MCF 10A (cell line): ENCODE measurements at regions of chr13 and their contacts with region 1.

Region 1: GRCh38 chr13:76667551-76667950 is 218.7 kb downstream of the KCTD12 start:
- DNase-seq: peak; percentile 59
- H3K4me3 Mint-ChIP-seq: no peak overlapping the region
- H3K27ac Mint-ChIP-seq: no peak overlapping the region
- H3K4me1 Mint-ChIP-seq: peaks cover 20% of the 10 kb centered on the region
- H3K27me3 Mint-ChIP-seq: no peaks in the 10 kb centered on the region
- CTCF ChIP-seq: peak; percentile 26

Region 2: GRCh38 chr13:76822698-76823267 is 155.2 kb after region 1 on chr13:
- CTCF ChIA-PET with region 1: interaction called, 4 read pairs
- POLR2A ChIA-PET with region 1: no interaction called
- intact Hi-C with region 1: loop called (anchors 2 kb)
- DNase-seq: peak; percentile 51
- H3K4me3 Mint-ChIP-seq: no peak overlapping the region
- H3K27ac Mint-ChIP-seq: no peak overlapping the region
- H3K4me1 Mint-ChIP-seq: no peaks in the 10 kb centered on the region
- H3K27me3 Mint-ChIP-seq: peaks cover 12% of the 10 kb centered on the region
- CTCF ChIP-seq: peak; percentile 37

Region 3: GRCh38 chr13:76879203-76879882 is 211.8 kb after region 1 on chr13:
- CTCF ChIA-PET with region 1: interaction called, 101 read pairs
- POLR2A ChIA-PET with region 1: interaction called, 25 read pairs
- intact Hi-C with region 1: no loop called
- DNase-seq: peak; percentile 92
- H3K4me3 Mint-ChIP-seq: peak overlapping the region; percentile 67
- H3K27ac Mint-ChIP-seq: peak overlapping the region; percentile 98
- H3K4me1 Mint-ChIP-seq: peaks cover 21% of the 10 kb centered on the region
- H3K27me3 Mint-ChIP-seq: no peaks in the 10 kb centered on the region
- CTCF ChIP-seq: no peak

Region 4: DNA sequence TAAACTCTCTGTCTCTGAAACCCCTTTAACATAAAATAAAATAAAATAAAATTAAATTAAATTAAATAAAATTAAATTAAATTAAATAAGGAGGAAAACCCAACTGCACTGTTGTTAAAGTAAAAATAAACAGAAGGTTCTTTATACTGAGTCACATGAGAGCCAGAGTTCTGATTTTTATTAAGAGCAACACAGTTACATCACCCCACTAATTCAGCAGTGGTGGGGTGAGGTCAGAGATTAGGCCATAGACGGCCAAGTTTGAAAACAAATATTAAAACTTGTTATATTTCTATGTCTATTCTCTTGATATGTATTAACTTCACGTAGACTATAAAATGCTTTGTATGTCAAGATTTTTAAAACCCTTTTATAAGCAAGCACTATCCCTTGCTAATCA is 599.8 kb after region 1 on chr13:
- CTCF ChIA-PET with region 1: no interaction called
- POLR2A ChIA-PET with region 1: no interaction called
- intact Hi-C with region 1: no loop called
- DNase-seq: no peak
- H3K4me3 Mint-ChIP-seq: no peak overlapping the region
- H3K27ac Mint-ChIP-seq: no peak overlapping the region
- H3K4me1 Mint-ChIP-seq: no peaks in the 10 kb centered on the region
- H3K27me3 Mint-ChIP-seq: no peaks in the 10 kb centered on the region
- CTCF ChIP-seq: no peak